Posterior cingulate gyrus (tissue), 11 donors: ENCODE measurements at regions of chr5 and their contacts with region 1.

Region 1: GRCh38 chr5:107248066-107248695 is 422.6 kb downstream of the EFNA5 start:
- DNase-seq: peak in 6 of 10 donors; percentile 38 to 68 (median 48)

Region 2: GRCh38 chr5:106759581-106759980 is 488.6 kb before region 1 on chr5:
- intact Hi-C with region 1: no loop called
- DNase-seq: no peak

Region 3: GRCh38 chr5:107067395-107067794 is 180.8 kb before region 1 on chr5:
- intact Hi-C with region 1: loop called (anchors 5 kb)
- DNase-seq: peak in 9 of 10 donors; percentile 11 to 90 (median 32)

Region 4: GRCh38 chr5:107719034-107719606 is 470.9 kb after region 1 on chr5:
- intact Hi-C with region 1: no loop called
- DNase-seq: peak in 2 of 10 donors; percentile 64 to 68